Calu3 (cell line): ENCODE measurements at regions of chr16 and their contacts with region 1.

Region 1: GRCh38 chr16:51888534-51888933 is 658.4 kb downstream of the TOX3 start:
- DNase-seq: no peak
- H3K4me3 Mint-ChIP-seq: no peak overlapping the region
- H3K27ac Mint-ChIP-seq: no peak overlapping the region
- H3K4me1 Mint-ChIP-seq: peaks cover 8% of the 10 kb centered on the region
- H3K27me3 Mint-ChIP-seq: no peaks in the 10 kb centered on the region
- CTCF ChIP-seq: no peak

Region 2: DNA sequence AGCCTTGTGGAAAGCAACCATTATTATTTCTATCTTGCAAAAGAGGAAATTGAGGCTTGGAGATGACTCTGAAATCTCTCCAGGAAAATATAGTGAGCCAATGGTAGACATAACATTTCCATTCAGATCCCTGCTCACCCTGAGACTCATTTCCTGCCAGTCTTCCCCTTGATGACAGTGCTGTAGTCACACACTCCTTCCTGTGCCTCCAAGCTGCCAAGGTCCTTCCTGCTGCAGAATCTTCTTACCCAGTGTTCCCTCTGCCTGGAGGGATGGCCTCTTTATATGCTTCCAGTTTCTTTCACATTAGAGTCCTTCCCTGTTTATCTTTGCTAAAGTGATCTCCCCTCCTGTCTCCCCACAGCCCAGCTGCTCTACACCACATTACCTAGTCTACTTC is 10.3 kb after region 1 on chr16:
- CTCF ChIA-PET with region 1: interaction called, 10 read pairs
- intact Hi-C with region 1: no loop called
- DNase-seq: no peak
- H3K4me3 Mint-ChIP-seq: no peak overlapping the region
- H3K27ac Mint-ChIP-seq: no peak overlapping the region
- H3K4me1 Mint-ChIP-seq: no peaks in the 10 kb centered on the region
- H3K27me3 Mint-ChIP-seq: no peaks in the 10 kb centered on the region
- CTCF ChIP-seq: no peak